HEK293T (cell line): ENCODE measurements at regions of chr19 and their contacts with region 1.

Region 1: DNA sequence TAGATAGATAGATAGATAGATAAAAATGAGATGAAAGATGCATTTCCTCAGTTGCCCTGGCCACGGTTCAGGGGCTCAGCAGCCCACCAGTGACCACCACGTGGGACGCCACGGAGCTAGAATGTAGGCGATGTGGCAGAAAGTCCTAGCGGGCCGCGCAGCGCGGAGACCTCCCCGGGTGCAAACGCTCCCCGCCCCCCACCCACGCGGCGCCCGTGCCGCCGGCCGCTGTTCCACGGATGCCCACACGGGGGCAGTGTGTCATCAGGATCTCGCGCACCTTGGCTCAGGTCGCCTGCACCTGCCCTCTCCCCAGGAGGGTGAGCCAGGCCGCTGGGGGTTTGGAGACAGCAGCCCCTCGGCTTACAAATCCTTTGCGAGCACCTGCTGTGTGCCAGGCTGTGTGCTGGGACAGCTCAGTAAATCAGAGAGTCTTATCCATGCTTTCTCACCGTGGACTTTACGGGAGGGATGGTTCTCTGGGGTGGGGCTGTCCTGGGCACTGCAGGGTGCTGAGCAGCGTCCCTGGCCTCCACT is 13.7 kb upstream of the TLE5 start:
- DNase-seq: peak; percentile 79

Region 2: GRCh38 chr19:3054972-3055740 is 20.8 kb before region 1 on chr19:
- CTCF ChIA-PET with region 1: interaction called, 12 read pairs
- POLR2A ChIA-PET with region 1: no interaction called
- DNase-seq: no peak

Region 3: GRCh38 chr19:3108775-3109174 is 32.8 kb after region 1 on chr19:
- CTCF ChIA-PET with region 1: interaction called, 14 read pairs
- POLR2A ChIA-PET with region 1: no interaction called
- DNase-seq: peak; percentile 67

Region 4: GRCh38 chr19:3120032-3120615 is 44.2 kb after region 1 on chr19:
- CTCF ChIA-PET with region 1: no interaction called
- POLR2A ChIA-PET with region 1: no interaction called
- DNase-seq: no peak